ENCODE measurements at regions of chr11 and their contacts with region 1.

Region 1: DNA sequence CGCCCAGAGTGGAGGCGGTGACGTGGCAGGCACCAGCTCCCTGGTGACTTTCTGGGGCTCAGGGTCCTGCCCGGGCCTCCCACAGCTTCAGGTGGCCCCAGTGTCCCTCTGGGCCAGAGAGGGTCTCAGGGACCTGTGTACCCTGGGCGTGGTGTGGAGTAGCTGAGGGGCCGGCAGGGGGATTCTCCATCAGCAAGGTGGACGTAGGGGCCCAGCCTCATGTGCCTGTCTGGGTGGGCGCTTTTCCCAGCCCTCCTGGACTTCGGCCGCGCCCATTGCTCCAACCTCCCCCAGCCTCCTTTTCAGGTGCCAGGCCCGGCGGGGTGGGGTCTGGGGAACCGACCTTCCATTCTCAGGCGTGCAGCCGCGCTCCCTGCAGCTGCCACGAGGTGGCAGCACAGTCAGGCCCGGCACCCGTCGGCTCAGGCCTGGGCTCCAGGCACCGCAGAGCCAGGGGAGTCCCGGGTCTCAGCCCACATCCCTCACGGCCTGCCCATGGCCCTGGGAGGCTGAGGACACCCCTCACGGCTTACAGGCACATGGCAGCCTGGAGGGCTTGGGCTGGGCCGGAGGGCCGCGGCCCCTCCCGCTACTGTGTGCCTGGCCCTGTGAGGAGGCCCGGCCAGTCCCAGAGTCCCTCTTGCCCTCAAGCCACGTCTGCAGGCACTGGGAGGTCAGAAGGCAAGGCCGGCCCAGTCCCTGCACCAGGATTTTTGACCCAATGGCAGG is 19.9 kb upstream of the MUC5B start:
- DNase-seq: peak; percentile 24
- ATAC-seq: peak; percentile 80
- H3K4me3 ChIP-seq: peak overlapping the region in 1 of 3 experiments; percentile 21; a peak in 1 of 6 replicates
- H3K27ac ChIP-seq: no peak overlapping the region
- H3K4me1 ChIP-seq: 0 out of 2 replicates have a peak, but pooled peaks cover 3% of the 10 kb centered on the region
- H3K27me3 ChIP-seq: peaks cover 48 to 83% of the 10 kb centered on the region in 2 experiments
- CTCF ChIP-seq: peak; percentile 96
- EP300 ChIP-seq: no peak
- POLR2A ChIP-seq: no peak
- RAD21 ChIP-seq: peak; percentile 90

Region 2: GRCh38 chr11:1233331-1233715 is 30.4 kb after region 1 on chr11:
- CTCF ChIA-PET with region 1: interaction called, 4 read pairs
- POLR2A ChIA-PET with region 1: no interaction called
- in situ Hi-C with region 1: no loop called
- intact Hi-C with region 1: loop called (anchors 1 kb)
- DNase-seq: no peak
- ATAC-seq: peak; percentile 17; the same call in 1 of the 3 replicates
- H3K4me3 ChIP-seq: no peak overlapping the region
- H3K27ac ChIP-seq: no peak overlapping the region
- H3K4me1 ChIP-seq: no peaks in the 10 kb centered on the region
- H3K27me3 ChIP-seq: peaks cover 2 to 3% of the 10 kb centered on the region in 2 experiments; a peak in 3 of 5 replicates
- CTCF ChIP-seq: peak; percentile 54
- EP300 ChIP-seq: no peak
- POLR2A ChIP-seq: no peak
- RAD21 ChIP-seq: 0 out of 2 replicates have a peak, but pooled peaks have one; percentile 15

Region 3: DNA sequence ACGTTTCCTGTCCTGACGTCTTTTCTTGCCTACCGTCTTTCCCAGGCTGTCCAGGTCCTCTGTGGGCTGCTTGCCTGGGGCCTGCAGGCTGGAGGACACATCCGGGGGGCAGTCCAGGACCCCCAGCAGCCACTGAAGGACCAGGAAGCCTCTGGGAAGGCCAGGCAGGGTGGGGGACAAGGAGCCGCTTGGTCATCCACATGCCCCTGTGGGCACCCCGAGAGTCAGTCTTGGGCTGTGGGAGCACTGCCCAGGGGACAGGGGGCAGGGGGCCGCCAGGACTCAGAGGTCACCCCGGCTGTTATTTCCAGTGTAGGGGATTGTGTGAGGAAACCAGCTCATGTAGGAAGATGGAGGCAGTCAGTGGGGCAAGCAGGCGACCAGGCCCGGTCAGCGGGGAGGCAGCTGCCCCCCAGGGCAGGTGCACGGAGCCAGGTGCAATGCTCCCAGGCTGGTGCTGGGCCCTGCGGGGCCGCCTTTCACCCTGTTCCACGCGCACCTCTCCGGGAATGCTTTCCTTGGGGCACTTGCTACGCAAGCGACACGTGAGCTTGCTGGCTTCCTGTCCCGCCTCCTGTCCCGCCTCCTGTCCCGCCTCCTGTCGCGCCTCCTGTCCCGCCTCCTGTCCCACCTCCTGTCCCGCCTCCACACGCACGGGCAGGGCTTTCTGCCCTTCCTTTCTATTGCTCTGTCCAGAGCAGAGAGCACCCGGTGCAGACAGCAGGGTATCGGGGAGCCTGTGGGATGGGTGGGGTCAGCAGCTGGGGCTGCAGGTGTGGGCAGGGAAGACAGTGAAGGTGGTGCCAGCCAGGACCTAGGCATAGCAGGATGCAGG is 59.4 kb after region 1 on chr11:
- CTCF ChIA-PET with region 1: no interaction called
- POLR2A ChIA-PET with region 1: no interaction called
- in situ Hi-C with region 1: no loop called
- intact Hi-C with region 1: loop called (anchors 10 kb)
- DNase-seq: peak; percentile 82
- ATAC-seq: peak; percentile 86
- H3K4me3 ChIP-seq: peak overlapping the region; percentile 53 to 83 (median 57)
- H3K27ac ChIP-seq: peak overlapping the region; percentile 65
- H3K4me1 ChIP-seq: peaks cover 27% of the 10 kb centered on the region
- H3K27me3 ChIP-seq: no peaks in the 10 kb centered on the region; a peak in 1 of 5 replicates
- CTCF ChIP-seq: no peak; the same call in 1 of the 2 replicates
- EP300 ChIP-seq: peak in 1 of 2 experiments; percentile 25; a peak in 1 of 4 replicates
- POLR2A ChIP-seq: peak; percentile 81 to 96
- RAD21 ChIP-seq: 0 out of 2 replicates have a peak, but pooled peaks have one; percentile 8

Region 4: GRCh38 chr11:1515082-1516060 is 312.4 kb after region 1 on chr11:
- CTCF ChIA-PET with region 1: interaction called, 11 read pairs
- POLR2A ChIA-PET with region 1: interaction called, 3 read pairs
- in situ Hi-C with region 1: no loop called
- intact Hi-C with region 1: loop called (anchors 2 kb)
- DNase-seq: peak; percentile 23
- ATAC-seq: peak; percentile 94
- H3K4me3 ChIP-seq: no peak overlapping the region
- H3K27ac ChIP-seq: no peak overlapping the region
- H3K4me1 ChIP-seq: no peaks in the 10 kb centered on the region
- H3K27me3 ChIP-seq: no peaks in the 10 kb centered on the region
- CTCF ChIP-seq: peak; percentile 98
- EP300 ChIP-seq: no peak
- POLR2A ChIP-seq: no peak
- RAD21 ChIP-seq: peak; percentile 92